Pancreas (tissue), 10 donors: ENCODE measurements at regions of chr7 and their contacts with region 1.

Region 1: GRCh38 chr7:26365077-26365900 is 73.6 kb downstream of the SNX10 start:
- DNase-seq: peak in 3 of 6 donors; percentile 52 to 69 (median 55)
- ATAC-seq: peak; percentile 78 to 89 (median 88)
- H3K4me3 ChIP-seq: no peak overlapping the region
- H3K27ac ChIP-seq: peak overlapping the region in 3 of 4 donors; percentile 13 to 73 (median 55)
- H3K4me1 ChIP-seq: peaks cover 0 to 32% (median 22%) of the 10 kb centered on the region in 3 donors
- H3K27me3 ChIP-seq: no peaks in the 10 kb centered on the region
- CTCF ChIP-seq: peak; percentile 32 to 67 (median 52)

Region 2: GRCh38 chr7:25894902-25895791 is 470.1 kb before region 1 on chr7:
- intact Hi-C with region 1: loop called in 2 of 3 experiments (anchors 5 to 10 kb)
- DNase-seq: peak; percentile 70 to 89 (median 78)
- ATAC-seq: peak; percentile 74 to 83 (median 79)
- H3K4me3 ChIP-seq: peak overlapping the region in 3 of 4 donors; percentile 2 to 26 (median 25)
- H3K27ac ChIP-seq: peak overlapping the region in 2 of 4 donors; percentile 53 to 61
- H3K4me1 ChIP-seq: peaks cover 4 to 37% (median 5%) of the 10 kb centered on the region in 3 donors
- H3K27me3 ChIP-seq: no peaks in the 10 kb centered on the region
- CTCF ChIP-seq: peak; percentile 64 to 77 (median 74)

Region 3: DNA sequence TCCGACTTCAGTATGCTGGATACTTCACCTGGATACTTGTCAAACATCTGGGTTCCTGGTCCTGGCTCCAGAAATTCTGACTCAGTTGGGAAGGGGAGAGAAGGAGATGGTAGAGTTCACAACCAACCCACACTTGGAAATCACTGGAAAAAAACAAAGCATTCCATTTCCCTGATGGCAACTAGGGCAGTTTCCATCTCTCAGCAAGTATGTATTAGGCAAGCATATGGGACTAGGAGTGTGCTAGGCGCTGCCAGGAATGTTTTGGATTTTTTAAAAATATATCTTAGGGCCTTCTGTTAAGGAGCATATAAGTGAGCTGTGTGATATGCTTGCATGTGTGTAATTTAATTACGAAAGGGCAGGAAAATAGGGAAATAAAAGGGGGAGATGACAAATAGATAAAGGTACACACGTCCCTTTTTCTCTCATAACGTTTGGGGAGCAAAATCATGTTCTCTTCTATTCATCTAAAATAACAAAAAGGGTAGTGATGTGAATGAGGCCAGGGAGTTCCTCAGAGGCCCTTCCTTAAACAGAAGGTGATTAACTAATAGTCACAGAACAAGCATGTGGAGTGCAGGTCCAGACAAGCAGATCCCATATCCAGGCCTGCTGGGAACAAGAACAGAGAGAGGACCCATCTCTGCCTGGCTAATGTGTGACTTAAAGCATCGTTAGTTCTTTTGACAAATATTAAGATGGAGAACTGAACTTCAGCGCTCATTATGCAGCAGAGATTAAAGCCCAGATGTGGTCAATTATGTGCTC is 277.8 kb before region 1 on chr7:
- intact Hi-C with region 1: loop called in 1 of 3 experiments (anchors 5 kb)
- DNase-seq: no peak
- ATAC-seq: no peak
- H3K4me3 ChIP-seq: no peak overlapping the region
- H3K27ac ChIP-seq: no peak overlapping the region
- H3K4me1 ChIP-seq: no peaks in the 10 kb centered on the region
- H3K27me3 ChIP-seq: no peaks in the 10 kb centered on the region
- CTCF ChIP-seq: no peak

Region 4: GRCh38 chr7:26143298-26144048 is 221.8 kb before region 1 on chr7:
- intact Hi-C with region 1: no loop called
- DNase-seq: no peak
- ATAC-seq: no peak
- H3K4me3 ChIP-seq: no peak overlapping the region
- H3K27ac ChIP-seq: no peak overlapping the region
- H3K4me1 ChIP-seq: no peaks in the 10 kb centered on the region
- H3K27me3 ChIP-seq: no peaks in the 10 kb centered on the region
- CTCF ChIP-seq: no peak

Region 5: DNA sequence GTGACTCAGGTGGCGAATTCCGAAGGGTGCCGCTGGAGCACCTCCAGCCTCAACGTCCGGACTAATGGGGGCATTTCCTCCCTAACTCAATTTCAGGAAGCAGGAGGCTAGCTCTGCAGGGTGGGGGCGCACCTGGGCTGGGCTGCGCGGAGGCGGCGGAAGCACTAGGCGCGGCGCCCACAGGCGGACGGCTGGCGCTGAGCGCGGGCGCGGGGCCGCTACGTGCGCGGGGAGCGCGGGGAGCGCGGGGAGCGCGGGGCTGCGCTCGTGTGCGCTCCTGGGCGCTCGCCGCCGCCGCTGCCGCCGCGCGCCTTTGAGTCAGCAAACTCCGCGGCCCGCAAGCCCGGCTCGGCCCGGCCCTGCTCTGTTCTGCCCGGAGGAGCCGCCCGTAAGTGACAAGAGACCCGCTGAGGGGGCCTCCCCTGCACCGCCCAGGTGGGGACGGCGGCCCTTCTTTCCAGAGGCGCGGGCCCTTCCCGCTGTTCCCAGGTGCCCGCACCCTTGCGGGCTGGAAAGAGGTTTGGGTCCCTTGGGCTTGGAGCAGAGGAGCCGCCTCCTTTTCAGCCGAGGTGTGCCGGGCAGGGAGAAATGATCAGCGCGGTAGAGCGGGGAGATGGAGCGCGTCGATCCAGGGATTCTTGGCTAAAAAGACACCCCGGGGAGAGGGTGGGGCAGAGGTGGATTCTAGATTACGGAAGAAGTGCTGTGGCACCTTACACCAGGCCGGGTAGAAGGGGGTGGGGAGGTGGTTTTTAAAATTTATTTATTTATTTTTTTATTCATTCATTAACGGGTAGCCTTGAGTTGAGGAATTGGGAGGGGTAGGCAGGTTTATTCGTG is 73.4 kb before region 1 on chr7 and contains the start of gene SNX10:
- intact Hi-C with region 1: loop called in 1 of 3 experiments (anchors 5 kb)
- DNase-seq: peak; percentile 65 to 89 (median 75)
- ATAC-seq: peak; percentile 91 to 96 (median 93)
- H3K4me3 ChIP-seq: peak within 1 kb of the TSS; percentile 33 to 86 (median 50)
- H3K27ac ChIP-seq: peak within 1 kb of the TSS in 3 of 4 donors; percentile 51 to 91 (median 73)
- H3K4me1 ChIP-seq: peaks cover 0 to 8% (median 0%) of the 10 kb centered on the region in 3 donors
- H3K27me3 ChIP-seq: no peaks in the 10 kb centered on the region
- CTCF ChIP-seq: peak in 1 of 4 donors; percentile 10
- total RNA-seq, gene SNX10: 2.9 to 23.5 (median 6.0) TPM

Region 6: GRCh38 chr7:26667500-26668133 is 302.3 kb after region 1 on chr7:
- intact Hi-C with region 1: loop called in 2 of 3 experiments (anchors 2 to 5 kb)
- DNase-seq: peak in 4 of 6 donors; percentile 43 to 82 (median 78)
- ATAC-seq: peak; percentile 91 to 98 (median 96)
- H3K4me3 ChIP-seq: no peak overlapping the region
- H3K27ac ChIP-seq: no peak overlapping the region
- H3K4me1 ChIP-seq: peaks cover 0 to 7% (median 0%) of the 10 kb centered on the region in 3 donors
- H3K27me3 ChIP-seq: no peaks in the 10 kb centered on the region
- CTCF ChIP-seq: peak; percentile 40 to 63 (median 43)